ENCODE measurements at regions of chr2 and their contacts with region 1.

Region 1: GRCh38 chr2:170122883-170123584 is 54.9 kb upstream of the MYO3B start:
- DNase-seq: peak; percentile 41
- H3K4me3 Mint-ChIP-seq: no peak overlapping the region
- H3K27ac Mint-ChIP-seq: no peak overlapping the region
- H3K4me1 Mint-ChIP-seq: peaks cover 61% of the 10 kb centered on the region
- H3K27me3 Mint-ChIP-seq: no peaks in the 10 kb centered on the region
- CTCF ChIP-seq: no peak

Region 2: GRCh38 chr2:170052151-170052550 is 70.9 kb before region 1 on chr2:
- CTCF ChIA-PET with region 1: no interaction called
- intact Hi-C with region 1: no loop called
- DNase-seq: no peak
- H3K4me3 Mint-ChIP-seq: no peak overlapping the region
- H3K27ac Mint-ChIP-seq: no peak overlapping the region
- H3K4me1 Mint-ChIP-seq: no peaks in the 10 kb centered on the region
- H3K27me3 Mint-ChIP-seq: no peaks in the 10 kb centered on the region
- CTCF ChIP-seq: no peak

Region 3: GRCh38 chr2:170155022-170155722 is 32.1 kb after region 1 on chr2:
- CTCF ChIA-PET with region 1: no interaction called
- intact Hi-C with region 1: loop called (anchors 5 kb)
- DNase-seq: peak; percentile 22
- H3K4me3 Mint-ChIP-seq: no peak overlapping the region
- H3K27ac Mint-ChIP-seq: no peak overlapping the region
- H3K4me1 Mint-ChIP-seq: peaks cover 45% of the 10 kb centered on the region
- H3K27me3 Mint-ChIP-seq: no peaks in the 10 kb centered on the region
- CTCF ChIP-seq: no peak

Region 4: GRCh38 chr2:170177950-170178781 is 55.1 kb after region 1 on chr2 and contains the start of gene MYO3B:
- CTCF ChIA-PET with region 1: interaction called, 3 read pairs
- intact Hi-C with region 1: loop called (anchors 2 kb)
- DNase-seq: no peak
- H3K4me3 Mint-ChIP-seq: no peak within 1 kb of the TSS
- H3K27ac Mint-ChIP-seq: peak within 1 kb of the TSS; percentile 56
- H3K4me1 Mint-ChIP-seq: peaks cover 51% of the 10 kb centered on the region
- H3K27me3 Mint-ChIP-seq: no peaks in the 10 kb centered on the region
- CTCF ChIP-seq: no peak
- total RNA-seq, gene MYO3B: 5.0 and 7.1 TPM in 2 replicates